ENCODE measurements at regions of chr11 and their contacts with region 1.

Region 1: DNA sequence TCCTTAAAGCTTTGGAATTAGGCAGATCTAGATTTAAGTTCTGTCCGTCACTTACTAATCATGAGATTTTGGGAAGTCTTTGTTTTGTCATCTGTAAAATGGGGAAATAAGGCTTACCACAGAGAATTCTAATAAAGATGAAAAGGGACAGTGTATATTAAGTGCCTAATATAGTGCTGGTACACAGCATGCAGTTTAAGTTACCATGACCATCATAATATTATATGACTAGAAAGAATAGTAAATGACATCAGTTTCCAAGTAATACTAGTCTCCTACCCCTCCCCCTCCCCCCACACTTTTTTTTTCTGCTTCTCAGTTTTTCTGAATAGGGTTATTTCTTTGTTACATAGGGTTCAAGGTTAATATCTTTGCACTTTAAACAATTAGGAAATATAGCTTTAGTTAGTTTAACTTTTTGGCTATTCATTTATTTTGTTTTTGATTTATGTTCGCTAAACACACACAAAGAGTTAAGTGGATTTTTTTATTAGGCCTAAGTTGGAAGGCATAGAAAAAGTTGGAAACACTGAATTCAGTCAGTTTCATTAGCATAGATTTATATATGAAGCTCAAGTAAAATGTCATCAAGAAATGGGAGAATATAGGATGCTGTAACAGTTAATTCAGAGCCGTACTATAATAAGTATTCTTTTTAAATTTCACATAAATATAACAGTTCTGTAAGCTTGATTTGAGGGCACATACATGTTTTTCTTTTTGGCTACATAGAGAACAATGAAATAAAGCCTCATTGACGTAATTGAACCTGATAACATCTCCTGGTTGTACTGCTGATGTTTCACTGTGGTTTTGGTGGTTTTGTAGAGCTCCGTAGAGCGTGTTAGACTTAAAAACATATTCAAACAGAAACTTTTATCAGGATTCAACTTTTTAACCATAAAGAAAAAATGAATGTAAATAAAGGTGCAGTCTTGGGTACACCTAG is 121.2 kb downstream of the PDE3B start:
- DNase-seq: peak; percentile 50
- ATAC-seq: peak; percentile 76
- H3K4me3 Mint-ChIP-seq: peak overlapping the region; percentile 62
- H3K27ac Mint-ChIP-seq: no peak overlapping the region
- H3K4me1 Mint-ChIP-seq: peaks cover 42% of the 10 kb centered on the region
- H3K27me3 Mint-ChIP-seq: no peaks in the 10 kb centered on the region

Region 2: GRCh38 chr11:14336507-14337503 is 428.0 kb before region 1 on chr11:
- CTCF ChIA-PET with region 1: no interaction called
- POLR2A ChIA-PET with region 1: no interaction called
- intact Hi-C with region 1: loop called in 1 of 2 experiments (anchors 10 kb)
- DNase-seq: no peak
- ATAC-seq: peak; percentile 96
- H3K4me3 Mint-ChIP-seq: peak overlapping the region; percentile 5
- H3K27ac Mint-ChIP-seq: peak overlapping the region; percentile 66
- H3K4me1 Mint-ChIP-seq: peaks cover 45% of the 10 kb centered on the region
- H3K27me3 Mint-ChIP-seq: no peaks in the 10 kb centered on the region

Region 3: DNA sequence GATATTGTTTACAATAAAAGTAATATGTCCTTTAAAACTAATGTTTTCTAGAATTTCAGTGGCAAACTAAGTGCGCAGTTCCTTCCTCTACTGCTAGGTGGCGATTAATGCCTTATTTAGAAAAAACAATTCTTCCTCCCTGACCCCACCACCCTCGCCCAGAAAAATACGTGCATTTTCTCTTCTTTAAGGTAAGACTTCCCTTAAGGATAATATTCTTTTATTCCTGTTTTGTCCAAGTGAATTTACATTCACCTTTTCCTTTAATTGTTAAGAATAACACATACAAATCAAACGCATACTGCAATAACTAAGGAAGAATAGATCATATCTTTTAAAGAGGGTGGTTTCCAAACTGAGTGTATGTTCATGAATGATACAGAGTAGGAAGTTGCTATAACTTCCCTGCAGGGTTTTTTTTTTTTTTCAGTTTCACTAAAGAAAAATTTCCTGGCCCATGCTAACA is 227.7 kb before region 1 on chr11:
- CTCF ChIA-PET with region 1: interaction called, 3 read pairs
- POLR2A ChIA-PET with region 1: no interaction called
- intact Hi-C with region 1: loop called in 1 of 2 experiments (anchors 1 kb)
- DNase-seq: peak; percentile 59
- ATAC-seq: peak; percentile 90
- H3K4me3 Mint-ChIP-seq: peak overlapping the region; percentile 59
- H3K27ac Mint-ChIP-seq: peak overlapping the region; percentile 87
- H3K4me1 Mint-ChIP-seq: peaks cover 22% of the 10 kb centered on the region
- H3K27me3 Mint-ChIP-seq: no peaks in the 10 kb centered on the region

Region 4: GRCh38 chr11:14578541-14578956 is 186.3 kb before region 1 on chr11:
- CTCF ChIA-PET with region 1: interaction called, 4 read pairs
- POLR2A ChIA-PET with region 1: interaction called, 5 read pairs
- intact Hi-C with region 1: loop called in 1 of 2 experiments (anchors 5 kb)
- DNase-seq: peak; percentile 58
- ATAC-seq: peak; percentile 89
- H3K4me3 Mint-ChIP-seq: peak overlapping the region; percentile 0
- H3K27ac Mint-ChIP-seq: peak overlapping the region; percentile 74
- H3K4me1 Mint-ChIP-seq: peaks cover 49% of the 10 kb centered on the region
- H3K27me3 Mint-ChIP-seq: no peaks in the 10 kb centered on the region

Region 5: GRCh38 chr11:14742849-14743559 is 21.8 kb before region 1 on chr11:
- CTCF ChIA-PET with region 1: no interaction called
- POLR2A ChIA-PET with region 1: no interaction called
- intact Hi-C with region 1: no loop called
- DNase-seq: no peak
- ATAC-seq: no peak
- H3K4me3 Mint-ChIP-seq: no peak overlapping the region
- H3K27ac Mint-ChIP-seq: no peak overlapping the region
- H3K4me1 Mint-ChIP-seq: peaks cover 49% of the 10 kb centered on the region
- H3K27me3 Mint-ChIP-seq: no peaks in the 10 kb centered on the region

Region 6: GRCh38 chr11:14784230-14784629 is 19.4 kb after region 1 on chr11:
- CTCF ChIA-PET with region 1: interaction called, 4 read pairs
- POLR2A ChIA-PET with region 1: no interaction called
- intact Hi-C with region 1: loop called (anchors 1 kb)
- DNase-seq: no peak
- ATAC-seq: peak; percentile 70
- H3K4me3 Mint-ChIP-seq: no peak overlapping the region
- H3K27ac Mint-ChIP-seq: peak overlapping the region; percentile 53
- H3K4me1 Mint-ChIP-seq: peaks cover 34% of the 10 kb centered on the region
- H3K27me3 Mint-ChIP-seq: no peaks in the 10 kb centered on the region

Region 7: DNA sequence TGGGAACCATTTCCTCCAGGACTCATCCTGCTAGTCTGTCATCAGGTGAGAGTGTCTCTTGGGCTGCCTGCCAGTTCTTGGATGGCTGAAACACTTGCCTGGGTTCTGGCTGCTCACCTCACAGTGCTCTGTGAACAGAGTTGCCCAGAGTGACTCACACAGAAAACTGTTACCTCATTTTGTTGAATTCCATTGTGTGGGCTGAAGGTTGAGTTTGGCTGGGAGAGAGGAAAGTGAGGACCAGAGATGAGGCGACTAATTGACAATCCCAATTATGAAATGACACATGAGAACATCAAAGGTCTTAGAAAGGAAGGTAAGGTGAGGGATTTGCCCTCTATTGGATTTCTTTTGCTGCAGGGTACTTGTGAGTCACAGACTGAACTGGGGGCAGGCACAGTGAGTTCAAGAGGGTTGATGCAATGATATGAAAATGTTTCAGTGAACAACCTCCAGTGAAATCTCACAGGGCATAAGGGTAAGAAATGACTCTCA is 288.4 kb after region 1 on chr11:
- CTCF ChIA-PET with region 1: interaction called, 3 read pairs
- POLR2A ChIA-PET with region 1: no interaction called
- intact Hi-C with region 1: loop called in 1 of 2 experiments (anchors 1 kb)
- DNase-seq: peak; percentile 68
- ATAC-seq: peak; percentile 87
- H3K4me3 Mint-ChIP-seq: no peak overlapping the region
- H3K27ac Mint-ChIP-seq: peak overlapping the region; percentile 84
- H3K4me1 Mint-ChIP-seq: peaks cover 28% of the 10 kb centered on the region
- H3K27me3 Mint-ChIP-seq: peaks cover 5% of the 10 kb centered on the region